ENCODE measurements at regions of chr17 and their contacts with region 1.

Region 1: DNA sequence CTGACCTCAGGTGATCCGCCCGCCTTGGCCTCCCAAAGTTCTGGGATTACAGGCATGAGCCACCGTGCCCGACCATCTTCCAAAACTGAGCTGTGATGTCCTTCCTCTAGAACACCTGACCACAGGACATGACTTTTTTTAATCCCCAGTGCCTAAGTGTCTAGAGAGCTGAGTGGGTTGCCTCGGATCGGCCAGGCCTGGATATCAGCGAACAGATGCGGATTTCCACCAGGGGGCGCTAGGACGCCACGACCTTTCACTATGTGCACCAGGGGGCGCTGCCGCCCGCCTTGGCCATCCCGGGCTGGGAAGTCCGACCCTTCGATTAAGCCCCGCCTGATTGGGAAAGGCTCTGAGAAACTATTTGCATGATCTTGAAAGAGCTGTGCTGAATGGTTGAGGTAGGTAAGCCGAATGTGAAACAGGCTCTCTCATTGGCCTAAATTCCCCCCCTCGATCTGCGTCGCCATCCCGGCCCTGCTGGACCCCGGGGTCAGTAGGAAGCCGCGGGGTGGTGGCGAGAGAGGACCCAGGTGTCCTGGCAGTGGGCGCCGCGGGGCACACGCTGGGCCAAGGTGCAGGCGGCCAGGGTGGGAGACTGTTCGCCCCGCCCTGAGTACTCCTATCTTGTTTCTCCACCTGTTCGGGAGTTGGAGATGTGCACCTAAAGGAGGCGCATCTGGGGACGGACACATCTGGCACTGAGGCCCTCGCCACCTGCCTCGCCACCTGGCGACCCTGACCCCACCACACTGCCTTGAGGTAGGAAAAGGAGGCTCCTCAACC is at the start of gene ACBD4:
- DNase-seq: peak; percentile 92

Region 2: DNA sequence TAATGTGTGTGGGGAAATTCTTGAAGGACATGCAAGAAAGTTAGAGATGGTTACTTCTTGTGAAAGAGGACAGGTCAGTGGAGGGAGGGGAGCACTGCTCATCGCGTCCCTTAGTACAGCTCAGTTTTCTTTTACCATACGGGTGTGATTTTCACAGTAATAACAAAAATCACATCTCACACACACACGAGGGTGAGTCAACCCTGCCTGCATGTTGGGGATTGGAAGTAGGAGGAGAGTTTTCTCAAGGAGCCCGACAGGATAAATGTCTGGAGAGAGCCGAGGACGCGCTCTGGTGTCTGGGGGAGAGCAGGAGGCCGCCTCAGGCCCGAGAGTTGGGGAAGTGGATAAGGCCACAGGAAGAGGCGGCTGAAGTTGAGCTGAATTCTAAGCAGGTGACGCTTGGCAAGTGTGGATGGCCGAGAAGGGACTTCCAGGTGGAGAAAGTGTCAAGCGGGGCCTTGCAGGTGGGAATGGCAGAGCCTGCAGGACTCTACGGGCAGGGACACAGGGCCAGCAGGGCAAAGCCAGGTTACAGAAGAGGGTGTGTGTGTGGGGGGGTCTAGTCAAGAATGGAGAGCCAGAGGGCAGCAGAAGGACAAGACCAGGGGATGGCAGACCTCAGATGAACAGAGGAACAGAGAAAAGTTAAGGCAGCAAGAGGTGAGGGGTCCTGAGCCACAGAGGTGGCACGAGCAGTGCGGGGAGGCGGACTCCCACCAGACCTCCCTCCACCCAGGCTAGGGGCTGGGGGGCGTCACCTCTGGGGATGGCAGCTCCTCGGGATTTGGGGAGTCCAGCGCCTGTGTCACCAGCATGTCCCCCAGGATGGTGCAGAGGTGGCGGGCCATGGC is 19.3 kb before region 1 on chr17:
- CTCF ChIA-PET with region 1: interaction called, 15 read pairs
- POLR2A ChIA-PET with region 1: no interaction called
- DNase-seq: no peak

Region 3: GRCh38 chr17:45155029-45155428 is 19.6 kb after region 1 on chr17:
- CTCF ChIA-PET with region 1: interaction called, 106 read pairs
- POLR2A ChIA-PET with region 1: interaction called, 69 read pairs
- DNase-seq: no peak

Region 4: GRCh38 chr17:45172454-45173286 is 37.3 kb after region 1 on chr17:
- CTCF ChIA-PET with region 1: interaction called, 23 read pairs
- POLR2A ChIA-PET with region 1: no interaction called
- DNase-seq: no peak

Region 5: GRCh38 chr17:45218895-45219661 is 83.7 kb after region 1 on chr17:
- CTCF ChIA-PET with region 1: interaction called, 12 read pairs
- POLR2A ChIA-PET with region 1: interaction called, 3 read pairs
- DNase-seq: peak; percentile 86

Region 6: GRCh38 chr17:45394913-45395568 is 259.7 kb after region 1 on chr17:
- CTCF ChIA-PET with region 1: interaction called, 11 read pairs
- POLR2A ChIA-PET with region 1: no interaction called
- DNase-seq: peak; percentile 85

Measured in HEK293T (cell line).